Dendritic cell treated with granulocyte-macrophage colony-stimulating factor and Interleukin-4, amounts not matched to agents 40 ng/mL and 50 ng/mL, for 4 days (primary cell): ENCODE measurements at regions of chr22 and their contacts with region 1.

Region 1: GRCh38 chr22:32660292-32660691 is 141.2 kb upstream of the TIMP3 start:
- H3K4me3 Mint-ChIP-seq: no peak overlapping the region
- H3K27ac Mint-ChIP-seq: no peak overlapping the region
- H3K4me1 Mint-ChIP-seq: peaks cover 8% of the 10 kb centered on the region
- H3K27me3 Mint-ChIP-seq: peaks cover 21% of the 10 kb centered on the region

Region 2: GRCh38 chr22:32796865-32797573 is 136.7 kb after region 1 on chr22:
- intact Hi-C with region 1: loop called (anchors 1 kb)
- H3K4me3 Mint-ChIP-seq: no peak overlapping the region
- H3K27ac Mint-ChIP-seq: no peak overlapping the region
- H3K4me1 Mint-ChIP-seq: peaks cover 2% of the 10 kb centered on the region
- H3K27me3 Mint-ChIP-seq: peaks cover 44% of the 10 kb centered on the region